ENCODE measurements at regions of chr11 and their contacts with region 1.

Region 1: DNA sequence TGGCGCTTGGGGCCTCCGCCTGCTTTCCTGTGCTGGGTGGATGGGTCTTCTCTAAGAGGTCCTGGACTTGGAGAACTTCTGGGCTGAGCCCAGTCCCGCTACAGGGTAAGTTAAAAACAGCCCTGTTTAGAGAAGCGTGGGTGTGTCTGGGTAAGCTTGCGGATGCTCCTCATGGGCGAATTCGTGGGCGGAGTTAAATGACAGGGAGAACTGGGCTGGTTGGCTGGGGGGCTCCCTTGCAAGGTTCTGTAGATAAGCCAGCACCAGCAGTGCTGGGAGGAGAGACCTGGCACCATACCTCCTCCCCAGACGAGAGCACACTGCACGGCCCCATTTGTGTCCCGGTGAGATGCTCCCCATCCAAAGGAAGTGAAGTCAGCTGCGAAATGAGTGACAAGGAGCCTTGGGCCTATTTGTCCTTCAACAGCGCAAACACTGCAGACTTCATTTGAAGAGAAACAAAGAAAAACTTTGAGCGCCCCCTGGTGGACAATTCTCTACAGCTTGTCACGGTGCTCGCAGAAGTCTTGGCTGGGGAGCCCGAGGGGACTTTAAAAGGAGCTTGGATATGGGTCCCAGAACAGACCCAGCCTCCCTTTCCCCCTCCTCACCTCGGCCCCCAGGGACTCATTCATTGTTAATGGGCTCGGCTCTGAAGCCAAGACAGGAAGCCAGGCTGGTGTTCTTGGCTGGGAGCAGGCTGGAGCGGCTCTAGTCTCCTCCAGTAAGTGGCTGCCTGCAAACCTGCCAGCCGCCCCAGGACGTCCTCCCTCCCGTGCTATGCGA is 39.5 kb downstream of the TP53I11 start:
- DNase-seq: peak; percentile 72 to 89 (median 78)
- ATAC-seq: peak; percentile 90
- H3K4me3 ChIP-seq: no peak overlapping the region
- H3K27ac ChIP-seq: no peak overlapping the region
- H3K4me1 ChIP-seq: peaks cover 0 to 23% of the 10 kb centered on the region in 2 donors
- H3K27me3 ChIP-seq: peaks cover 0 to 5% of the 10 kb centered on the region in 2 donors
- CTCF ChIP-seq: peak; percentile 86 to 89

Region 2: DNA sequence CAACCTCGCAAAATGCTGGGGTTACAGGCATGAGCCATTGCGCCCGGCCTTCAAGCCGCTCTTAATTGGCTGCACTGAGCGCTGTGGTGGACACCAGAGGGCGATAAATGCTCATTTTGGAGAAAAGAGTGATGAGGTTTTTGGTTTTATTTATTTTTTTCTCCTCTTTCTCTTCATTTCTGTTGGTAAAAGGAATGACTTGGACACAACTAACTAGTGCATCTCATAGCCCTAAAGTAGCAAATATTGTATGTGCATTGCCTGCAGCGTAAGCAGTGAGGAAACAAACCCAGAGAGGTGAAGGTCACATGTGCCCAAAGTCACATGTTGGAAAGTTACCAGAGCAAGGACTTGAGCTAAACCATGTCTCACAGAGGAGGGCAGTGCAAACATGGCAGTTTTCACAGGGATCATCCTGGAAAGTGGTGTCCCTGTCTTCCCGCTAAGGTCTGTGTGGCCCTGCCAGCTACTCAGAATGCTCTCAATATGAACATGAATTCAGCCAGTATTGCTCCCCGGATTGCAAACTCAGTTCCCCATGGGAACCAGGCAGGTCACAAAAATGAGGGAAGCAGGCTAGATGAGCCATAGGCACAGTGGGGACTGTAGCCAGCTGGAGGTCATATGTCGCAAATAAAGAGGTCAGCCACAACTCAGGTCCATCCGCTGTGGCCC is 354.4 kb before region 1 on chr11:
- intact Hi-C with region 1: loop called in 1 of 2 experiments (anchors 10 kb)
- DNase-seq: peak in 3 of 4 donors; percentile 60 to 85 (median 68)
- ATAC-seq: peak; percentile 87
- H3K4me3 ChIP-seq: no peak overlapping the region
- H3K27ac ChIP-seq: peak overlapping the region in 1 of 2 donors; percentile 30
- H3K4me1 ChIP-seq: peaks cover 0 to 28% of the 10 kb centered on the region in 2 donors
- H3K27me3 ChIP-seq: no peaks in the 10 kb centered on the region
- CTCF ChIP-seq: peak; percentile 68 to 73